CD4-positive, alpha-beta T cell (primary cell): ENCODE measurements at regions of chr1 and their contacts with region 1.

Region 1: GRCh38 chr1:15526490-15527339 is at the start of gene DNAJC16:
- DNase-seq: peak; percentile 88 to 99 (median 95)
- ATAC-seq: peak; percentile 30
- H3K4me3 ChIP-seq: peak within 1 kb of the TSS; percentile 66
- H3K4me3 Mint-ChIP-seq: peak within 1 kb of the TSS; percentile 96
- H3K27ac ChIP-seq: peak within 1 kb of the TSS; percentile 88 to 99
- H3K27ac Mint-ChIP-seq: peak within 1 kb of the TSS; percentile 100
- H3K4me1 ChIP-seq: peaks cover 41% of the 10 kb centered on the region
- H3K4me1 Mint-ChIP-seq: peaks cover 59% of the 10 kb centered on the region
- H3K27me3 ChIP-seq: no peaks in the 10 kb centered on the region
- H3K27me3 Mint-ChIP-seq: no peaks in the 10 kb centered on the region
- CTCF ChIP-seq: no peak
- total RNA-seq, gene DNAJC16: 8.2 to 10.4 TPM

Region 2: GRCh38 chr1:15578921-15579682 is 52.4 kb after region 1 on chr1:
- CTCF ChIA-PET with region 1: no interaction called
- POLR2A ChIA-PET with region 1: interaction called, 20 read pairs
- intact Hi-C with region 1: loop called (anchors 1 to 5 kb)
- DNase-seq: peak in 13 of 14 experiments; percentile 13 to 81 (median 48)
- ATAC-seq: peak; percentile 92
- H3K4me3 ChIP-seq: no peak overlapping the region
- H3K4me3 Mint-ChIP-seq: peak overlapping the region; percentile 67
- H3K27ac ChIP-seq: peak overlapping the region; percentile 64
- H3K27ac Mint-ChIP-seq: peak overlapping the region; percentile 97
- H3K4me1 ChIP-seq: peaks cover 58% of the 10 kb centered on the region
- H3K4me1 Mint-ChIP-seq: peaks cover 55% of the 10 kb centered on the region
- H3K27me3 ChIP-seq: no peaks in the 10 kb centered on the region
- H3K27me3 Mint-ChIP-seq: no peaks in the 10 kb centered on the region
- CTCF ChIP-seq: no peak

Region 3: GRCh38 chr1:15617175-15617880 is 90.6 kb after region 1 on chr1 and contains the start of gene DDI2:
- CTCF ChIA-PET with region 1: no interaction called
- POLR2A ChIA-PET with region 1: interaction called, 3 read pairs
- intact Hi-C with region 1: loop called (anchors 1 to 5 kb)
- DNase-seq: peak; percentile 84 to 97 (median 91)
- ATAC-seq: peak; percentile 90
- H3K4me3 ChIP-seq: peak within 1 kb of the TSS; percentile 91
- H3K4me3 Mint-ChIP-seq: peak within 1 kb of the TSS; percentile 97
- H3K27ac ChIP-seq: peak within 1 kb of the TSS; percentile 80 to 91
- H3K27ac Mint-ChIP-seq: peak within 1 kb of the TSS; percentile 89
- H3K4me1 ChIP-seq: peaks cover 45% of the 10 kb centered on the region
- H3K4me1 Mint-ChIP-seq: peaks cover 51% of the 10 kb centered on the region
- H3K27me3 ChIP-seq: no peaks in the 10 kb centered on the region
- H3K27me3 Mint-ChIP-seq: no peaks in the 10 kb centered on the region
- CTCF ChIP-seq: no peak
- total RNA-seq, gene DDI2: 24.2 to 29.9 TPM

Region 4: GRCh38 chr1:15835741-15836510 is 309.2 kb after region 1 on chr1:
- CTCF ChIA-PET with region 1: no interaction called
- POLR2A ChIA-PET with region 1: interaction called, 5 read pairs
- intact Hi-C with region 1: loop called in 1 of 2 experiments (anchors 5 kb)
- DNase-seq: peak; percentile 97 to 100 (median 99)
- ATAC-seq: peak; percentile 54
- H3K4me3 ChIP-seq: peak overlapping the region; percentile 70
- H3K4me3 Mint-ChIP-seq: peak overlapping the region; percentile 98
- H3K27ac ChIP-seq: peak overlapping the region; percentile 96 to 99
- H3K27ac Mint-ChIP-seq: peak overlapping the region; percentile 99
- H3K4me1 ChIP-seq: peaks cover 35% of the 10 kb centered on the region
- H3K4me1 Mint-ChIP-seq: peaks cover 26% of the 10 kb centered on the region
- H3K27me3 ChIP-seq: no peaks in the 10 kb centered on the region
- H3K27me3 Mint-ChIP-seq: no peaks in the 10 kb centered on the region
- CTCF ChIP-seq: no peak

Region 5: DNA sequence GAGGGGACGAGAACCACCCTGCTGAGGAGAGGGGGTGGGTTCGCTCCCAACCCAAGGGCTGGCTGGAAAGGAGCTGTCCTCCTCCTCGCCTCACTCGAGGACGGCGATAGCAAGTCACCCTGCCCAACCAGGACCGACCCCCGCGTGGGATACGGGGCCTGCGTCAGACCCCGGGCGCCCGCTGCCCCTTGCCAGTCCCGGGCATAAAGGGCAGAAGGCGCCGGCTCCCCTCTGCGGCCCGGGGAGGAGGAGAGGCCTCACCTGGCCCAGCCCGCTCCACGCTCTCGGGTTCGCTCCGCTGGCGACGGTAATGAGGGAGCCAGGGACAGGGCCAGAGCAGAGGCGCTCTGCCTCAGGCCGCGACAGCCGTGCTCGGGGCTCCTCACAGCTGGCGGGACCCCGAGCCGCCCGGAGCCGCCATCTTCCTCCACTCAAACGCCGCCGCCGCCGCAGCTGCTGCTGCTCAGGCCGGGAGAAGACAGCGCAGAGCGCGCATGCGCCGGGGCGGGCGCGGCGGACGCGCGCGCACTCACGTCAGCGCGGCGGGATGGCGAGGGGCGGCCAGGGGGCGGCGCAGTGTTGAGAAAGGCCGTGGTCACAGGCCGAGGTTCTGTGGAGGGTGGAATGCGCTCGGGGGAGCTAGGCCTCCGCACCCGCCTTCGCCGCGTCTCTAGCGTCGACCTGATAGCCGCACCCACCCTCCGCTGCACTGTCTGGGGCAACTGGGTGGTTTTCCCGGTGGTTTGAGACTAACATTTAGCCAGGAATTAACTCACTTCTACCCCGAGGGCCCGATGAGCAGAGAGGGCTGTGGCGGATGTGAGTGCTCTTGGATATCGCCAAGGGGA is 825.5 kb after region 1 on chr1 and contains the start of gene FBXO42:
- CTCF ChIA-PET with region 1: no interaction called
- POLR2A ChIA-PET with region 1: no interaction called
- intact Hi-C with region 1: loop called in 1 of 2 experiments (anchors 5 kb)
- DNase-seq: peak; percentile 82 to 98 (median 91)
- ATAC-seq: peak; percentile 90
- H3K4me3 ChIP-seq: peak within 1 kb of the TSS; percentile 97
- H3K4me3 Mint-ChIP-seq: peak within 1 kb of the TSS; percentile 97
- H3K27ac ChIP-seq: peak within 1 kb of the TSS; percentile 83 to 89
- H3K27ac Mint-ChIP-seq: peak within 1 kb of the TSS; percentile 93
- H3K4me1 ChIP-seq: peaks cover 30% of the 10 kb centered on the region
- H3K4me1 Mint-ChIP-seq: peaks cover 34% of the 10 kb centered on the region
- H3K27me3 ChIP-seq: no peaks in the 10 kb centered on the region
- H3K27me3 Mint-ChIP-seq: no peaks in the 10 kb centered on the region
- CTCF ChIP-seq: peak; percentile 52
- total RNA-seq, gene FBXO42: 14.3 to 14.9 TPM

Region 6: GRCh38 chr1:16904560-16905111 is 1377.9 kb after region 1 on chr1:
- CTCF ChIA-PET with region 1: no interaction called
- POLR2A ChIA-PET with region 1: no interaction called
- intact Hi-C with region 1: loop called in 1 of 2 experiments (anchors 10 kb)
- DNase-seq: peak; percentile 97 to 100 (median 99)
- ATAC-seq: peak; percentile 93
- H3K4me3 ChIP-seq: peak overlapping the region; percentile 63
- H3K4me3 Mint-ChIP-seq: no peak overlapping the region
- H3K27ac ChIP-seq: peak overlapping the region; percentile 98 to 99
- H3K27ac Mint-ChIP-seq: no peak overlapping the region
- H3K4me1 ChIP-seq: peaks cover 55% of the 10 kb centered on the region
- H3K4me1 Mint-ChIP-seq: peaks cover 36% of the 10 kb centered on the region
- H3K27me3 ChIP-seq: no peaks in the 10 kb centered on the region
- H3K27me3 Mint-ChIP-seq: no peaks in the 10 kb centered on the region
- CTCF ChIP-seq: no peak